Breast epithelium (tissue), 4 donors: ENCODE measurements at regions of chr2 and their contacts with region 1.

Region 1: DNA sequence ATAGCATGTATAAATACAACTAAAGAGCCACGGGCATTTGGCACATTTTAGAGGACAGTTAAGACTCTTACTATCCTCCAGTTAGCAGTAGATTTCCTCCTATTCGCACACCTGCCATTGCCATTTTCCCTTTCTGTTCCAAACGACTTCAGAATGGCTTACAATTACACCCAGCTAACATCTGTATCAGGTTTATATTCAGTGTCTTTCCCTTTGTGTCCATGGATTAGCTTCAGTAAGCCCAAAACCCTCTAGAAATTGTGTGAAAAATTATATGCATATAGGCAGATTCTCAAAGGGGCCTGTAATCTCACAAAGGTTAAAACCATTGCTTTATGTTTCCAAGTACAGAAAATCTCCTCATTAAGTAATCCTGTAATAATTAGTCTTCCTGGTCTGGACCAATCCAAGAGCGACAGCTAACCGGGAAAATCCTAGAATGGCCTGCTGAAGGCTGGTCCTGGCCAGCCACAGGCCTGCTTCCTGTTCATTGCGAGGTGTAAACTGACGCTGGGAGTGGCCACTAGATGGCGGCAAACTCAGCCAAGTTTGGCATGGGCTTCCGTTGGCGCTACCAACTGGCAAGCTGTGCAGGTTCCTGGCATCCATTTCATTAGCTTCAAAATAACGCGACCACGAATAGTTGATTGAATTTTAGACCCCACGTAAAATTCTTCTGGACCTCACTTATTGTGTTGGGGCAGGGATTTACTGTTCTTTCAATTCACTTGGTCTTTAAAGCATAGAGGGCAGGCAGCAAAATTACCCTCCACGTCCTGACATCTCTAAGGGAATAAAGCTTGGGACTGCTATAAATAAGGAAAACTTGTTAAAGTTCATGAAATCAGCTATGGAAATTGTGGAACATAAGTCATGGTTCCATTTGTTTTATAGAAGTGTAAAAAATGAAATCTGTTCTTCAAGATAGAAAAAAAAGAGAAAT is 17.1 kb downstream of the ARHGAP25 start:
- DNase-seq: peak; percentile 85 to 92
- H3K4me3 ChIP-seq: peak overlapping the region in 1 of 3 donors; percentile 45
- H3K27ac ChIP-seq: no peak overlapping the region
- H3K4me1 ChIP-seq: no peaks in the 10 kb centered on the region
- H3K27me3 ChIP-seq: no peaks in the 10 kb centered on the region
- CTCF ChIP-seq: peak; percentile 84 to 93 (median 86)
- POLR2A ChIP-seq: no peak

Region 2: GRCh38 chr2:69957965-69958364 is 1206.3 kb after region 1 on chr2:
- intact Hi-C with region 1: loop called (anchors 5 kb)
- DNase-seq: no peak
- H3K4me3 ChIP-seq: no peak overlapping the region
- H3K27ac ChIP-seq: no peak overlapping the region
- H3K4me1 ChIP-seq: no peaks in the 10 kb centered on the region
- H3K27me3 ChIP-seq: no peaks in the 10 kb centered on the region
- CTCF ChIP-seq: no peak
- POLR2A ChIP-seq: no peak